Dendritic cell treated with granulocyte-macrophage colony-stimulating factor and Interleukin-4, amounts not matched to agents 40 ng/mL and 50 ng/mL, for 4 days (primary cell): ENCODE measurements at regions of chr10 and their contacts with region 1.

Region 1: GRCh38 chr10:3025300-3025699 is 42.0 kb upstream of the PFKP start:
- H3K4me3 Mint-ChIP-seq: no peak overlapping the region
- H3K27ac Mint-ChIP-seq: peak overlapping the region; percentile 55
- H3K4me1 Mint-ChIP-seq: peaks cover 52% of the 10 kb centered on the region
- H3K27me3 Mint-ChIP-seq: peaks cover 25% of the 10 kb centered on the region

Region 2: DNA sequence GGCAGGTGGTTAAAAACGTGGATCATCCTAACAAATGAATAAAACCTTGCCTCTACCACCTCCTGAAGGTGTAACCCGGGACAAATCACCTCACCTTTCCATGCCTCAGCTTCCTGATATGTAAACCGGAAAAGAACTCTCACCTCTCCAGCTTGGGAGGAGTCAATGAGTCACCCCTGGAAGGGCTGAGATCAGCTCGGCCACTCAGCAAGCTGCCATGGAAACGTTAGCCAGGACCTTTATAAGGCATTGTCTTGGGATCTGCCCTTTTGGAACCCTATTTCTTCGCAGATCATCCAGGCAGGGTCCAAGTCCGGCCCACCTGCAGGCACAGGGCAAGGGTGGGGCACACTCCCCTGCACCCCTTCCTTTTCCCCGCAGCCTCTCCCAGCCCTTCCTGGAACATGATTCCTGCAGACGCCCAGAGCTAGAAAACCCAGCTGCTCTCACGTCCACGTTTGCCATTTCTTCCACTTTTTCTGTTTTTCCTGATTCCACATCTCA is 39.5 kb before region 1 on chr10:
- intact Hi-C with region 1: loop called (anchors 5 kb)
- H3K4me3 Mint-ChIP-seq: peak overlapping the region; percentile 59
- H3K27ac Mint-ChIP-seq: peak overlapping the region; percentile 71
- H3K4me1 Mint-ChIP-seq: peaks cover 68% of the 10 kb centered on the region
- H3K27me3 Mint-ChIP-seq: peaks cover 11% of the 10 kb centered on the region